ENCODE measurements at regions of chr2 and their contacts with region 1.

Region 1: DNA sequence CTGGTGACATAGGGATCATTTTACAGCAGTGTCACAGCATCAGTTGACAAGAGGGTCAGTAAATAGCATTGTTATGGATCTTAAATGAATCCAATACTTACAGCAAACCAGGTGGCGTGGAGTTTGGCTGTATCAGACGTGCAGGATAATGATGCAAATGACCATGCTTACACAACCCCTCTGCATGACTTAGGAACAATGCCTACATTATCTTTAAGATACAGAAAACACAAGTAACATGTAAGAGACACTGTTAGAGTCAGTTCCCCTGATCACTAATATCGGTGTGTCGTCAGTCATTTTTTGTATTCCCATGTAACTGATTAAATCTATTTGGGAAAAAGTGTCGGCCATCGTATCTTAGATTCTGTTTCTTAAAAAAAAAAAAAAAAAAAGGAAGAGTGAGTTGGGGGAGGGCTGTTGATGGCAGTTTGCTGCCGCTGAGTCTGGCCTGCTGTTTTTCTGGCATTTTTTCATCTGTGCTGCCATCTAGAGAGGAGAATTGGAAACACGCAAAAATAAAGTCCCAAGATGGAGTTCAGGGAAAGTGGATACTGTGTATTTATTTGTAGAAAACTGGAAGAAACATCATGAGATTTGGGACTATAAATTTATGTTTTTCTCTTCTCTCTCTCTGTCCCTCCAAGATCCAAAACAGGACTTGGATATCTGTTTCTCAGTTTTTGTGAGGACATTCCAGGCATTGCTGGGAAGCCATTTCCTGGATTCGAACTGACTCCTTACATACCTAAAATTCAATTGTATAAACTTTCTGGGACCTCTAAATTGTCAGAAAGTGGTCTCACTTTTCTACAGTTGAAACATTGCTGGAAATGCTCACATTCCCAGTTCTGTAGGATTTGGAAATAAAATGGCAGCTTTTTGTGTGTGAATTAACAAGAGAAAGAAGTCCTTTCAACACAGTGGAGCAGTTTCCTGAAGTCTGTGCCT is 60.3 kb upstream of the AGPS start:
- DNase-seq: peak; percentile 87
- H3K4me3 ChIP-seq: no peak overlapping the region
- H3K27ac ChIP-seq: peak overlapping the region; percentile 32
- H3K4me1 ChIP-seq: peaks cover 24% of the 10 kb centered on the region
- H3K27me3 ChIP-seq: no peaks in the 10 kb centered on the region
- CTCF ChIP-seq: peak; percentile 51 to 64
- POLR2A ChIP-seq: peak; percentile 25

Region 2: DNA sequence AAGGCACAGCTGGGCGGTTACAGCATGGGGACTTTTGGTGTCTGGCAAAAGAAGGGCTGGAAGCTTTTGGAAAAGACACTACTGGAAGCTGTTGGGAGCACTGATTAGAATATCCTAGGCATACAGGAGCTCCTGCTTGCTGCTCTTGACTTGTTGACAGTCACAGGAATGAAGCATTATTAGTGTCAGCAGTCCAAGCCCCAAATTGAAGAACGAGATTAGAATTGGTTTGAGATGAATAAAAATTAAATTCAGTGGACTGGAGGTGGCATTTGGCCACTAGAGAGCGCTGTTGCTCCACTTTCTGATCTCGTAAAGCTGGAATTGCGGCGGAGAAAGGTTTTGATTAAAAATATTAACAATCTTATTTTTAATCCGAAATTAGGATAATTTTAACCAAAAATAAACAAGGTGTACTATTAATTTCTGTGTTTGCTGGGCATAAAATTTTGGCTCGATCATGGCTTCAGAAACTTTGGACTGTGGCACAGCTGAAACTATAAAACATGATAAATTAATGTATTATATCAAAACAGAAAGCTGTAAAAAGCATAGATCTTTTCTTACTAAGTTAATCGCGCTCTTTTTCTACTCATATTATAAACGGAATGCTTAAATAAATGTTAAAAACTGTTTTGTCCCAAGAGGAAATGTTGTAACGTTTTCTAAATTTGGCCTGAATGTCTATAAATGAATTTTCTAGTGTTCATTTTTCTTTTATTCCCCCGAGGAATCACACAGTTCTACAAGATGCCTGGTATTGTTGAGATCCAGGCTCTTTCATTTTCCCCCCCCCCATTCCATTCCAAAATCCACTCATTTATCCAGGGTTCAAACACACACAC is 1205.2 kb before region 1 on chr2:
- CTCF ChIA-PET with region 1: no interaction called
- POLR2A ChIA-PET with region 1: no interaction called
- dilution Hi-C with region 1: no loop called
- intact Hi-C with region 1: loop called (anchors 1 kb)
- DNase-seq: peak; percentile 68
- H3K4me3 ChIP-seq: peak overlapping the region in 2 of 3 experiments; percentile 48 to 67
- H3K27ac ChIP-seq: no peak overlapping the region
- H3K4me1 ChIP-seq: peaks cover 33% of the 10 kb centered on the region
- H3K27me3 ChIP-seq: peaks cover 5 to 6% of the 10 kb centered on the region in 2 experiments
- CTCF ChIP-seq: peak; percentile 61 to 66
- POLR2A ChIP-seq: no peak

Region 3: DNA sequence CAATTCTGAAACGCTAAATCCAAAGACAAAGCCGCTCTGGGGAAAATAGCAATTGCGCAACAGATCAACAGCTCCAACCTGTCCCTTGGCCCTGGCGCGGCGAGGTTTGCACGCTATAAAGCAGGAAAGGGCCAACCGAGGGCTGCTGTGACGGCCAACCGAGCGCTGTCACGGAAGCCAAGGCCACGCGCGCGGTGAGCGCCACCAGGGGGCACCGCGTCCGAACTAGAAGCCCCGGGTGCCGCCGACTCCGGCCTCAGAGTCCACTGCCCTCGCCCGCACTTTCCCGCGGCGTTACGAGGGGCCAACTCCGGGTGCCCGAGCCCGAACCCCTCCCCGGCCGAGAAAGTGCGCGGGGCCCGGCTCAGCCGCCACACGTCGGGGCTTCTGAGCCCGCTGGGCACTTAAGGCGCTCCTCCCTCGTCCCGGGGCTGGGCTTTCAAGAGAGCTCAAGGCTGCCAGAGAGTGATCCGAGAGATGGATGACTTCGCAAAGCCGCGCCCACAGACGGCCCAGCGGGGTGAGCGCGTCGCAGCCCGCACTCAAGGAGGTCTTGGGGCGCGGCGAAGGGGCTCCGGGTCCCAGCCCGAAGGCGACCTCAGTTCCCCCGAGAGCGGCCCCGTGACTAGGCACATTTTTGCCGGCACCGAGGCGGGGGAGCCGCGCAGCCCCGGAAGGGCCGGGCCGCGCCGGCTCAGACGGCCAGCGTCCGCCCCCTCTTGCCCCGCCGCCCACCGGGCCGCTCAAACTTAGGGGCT is 68.7 kb before region 1 on chr2:
- CTCF ChIA-PET with region 1: interaction called, 20 read pairs
- POLR2A ChIA-PET with region 1: interaction called, 3 read pairs
- dilution Hi-C with region 1: no loop called
- intact Hi-C with region 1: loop called (anchors 1 kb)
- DNase-seq: peak; percentile 97
- H3K4me3 ChIP-seq: peak overlapping the region; percentile 79 to 98 (median 90)
- H3K27ac ChIP-seq: peak overlapping the region; percentile 94
- H3K4me1 ChIP-seq: peaks cover 27% of the 10 kb centered on the region
- H3K27me3 ChIP-seq: no peaks in the 10 kb centered on the region
- CTCF ChIP-seq: peak; percentile 91 to 98
- POLR2A ChIP-seq: peak; percentile 84

Region 4: DNA sequence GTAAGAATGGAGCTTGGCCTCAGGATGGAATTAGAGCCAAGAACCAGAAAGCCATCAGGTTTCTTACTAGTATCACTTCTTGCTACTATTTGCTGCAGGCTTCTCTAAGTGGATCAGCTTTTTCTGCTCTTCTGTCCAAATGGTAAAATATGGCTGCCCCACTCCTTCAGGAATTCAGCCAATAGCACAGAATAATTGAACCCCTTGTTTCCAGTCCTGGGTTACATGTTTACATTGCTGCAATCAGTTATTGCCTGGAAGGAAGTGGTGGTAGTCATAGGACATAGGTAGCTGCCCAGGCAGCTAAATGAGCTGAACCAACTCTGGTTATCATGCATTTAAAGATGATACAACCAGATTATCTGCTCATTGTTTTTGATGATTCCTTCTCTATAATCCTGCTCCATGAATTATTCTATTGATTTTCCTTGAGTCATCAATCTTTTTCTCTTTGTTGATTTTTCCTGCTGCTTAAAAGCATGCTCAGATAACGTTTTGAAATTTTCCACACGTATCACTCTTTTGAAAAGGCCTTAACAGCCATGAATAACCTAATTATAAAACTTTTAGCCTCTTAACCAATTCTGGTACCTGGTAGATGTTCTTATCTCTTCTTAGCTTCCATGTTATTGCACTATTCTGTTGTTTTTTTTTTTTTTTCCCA is 72.8 kb after region 1 on chr2:
- CTCF ChIA-PET with region 1: interaction called, 18 read pairs
- POLR2A ChIA-PET with region 1: no interaction called
- dilution Hi-C with region 1: no loop called
- intact Hi-C with region 1: no loop called
- DNase-seq: peak; percentile 65
- H3K4me3 ChIP-seq: no peak overlapping the region
- H3K27ac ChIP-seq: peak overlapping the region; percentile 7
- H3K4me1 ChIP-seq: peaks cover 40% of the 10 kb centered on the region
- H3K27me3 ChIP-seq: no peaks in the 10 kb centered on the region
- CTCF ChIP-seq: no peak
- POLR2A ChIP-seq: peak; percentile 58

Region 5: GRCh38 chr2:177489719-177490301 is 157.5 kb after region 1 on chr2:
- CTCF ChIA-PET with region 1: interaction called, 16 read pairs
- POLR2A ChIA-PET with region 1: no interaction called
- dilution Hi-C with region 1: no loop called
- intact Hi-C with region 1: loop called (anchors 1 kb)
- DNase-seq: peak; percentile 55
- H3K4me3 ChIP-seq: no peak overlapping the region
- H3K27ac ChIP-seq: no peak overlapping the region
- H3K4me1 ChIP-seq: no peaks in the 10 kb centered on the region
- H3K27me3 ChIP-seq: no peaks in the 10 kb centered on the region
- CTCF ChIP-seq: peak; percentile 42 to 45
- POLR2A ChIP-seq: no peak

Region 6: GRCh38 chr2:177724398-177725287 is 392.3 kb after region 1 on chr2:
- CTCF ChIA-PET with region 1: interaction called, 29 read pairs
- POLR2A ChIA-PET with region 1: no interaction called
- dilution Hi-C with region 1: no loop called
- intact Hi-C with region 1: loop called (anchors 1 kb)
- DNase-seq: peak; percentile 89
- H3K4me3 ChIP-seq: peak overlapping the region in 1 of 3 experiments; percentile 9
- H3K27ac ChIP-seq: peak overlapping the region; percentile 62
- H3K4me1 ChIP-seq: peaks cover 13% of the 10 kb centered on the region
- H3K27me3 ChIP-seq: no peaks in the 10 kb centered on the region
- CTCF ChIP-seq: peak; percentile 84 to 94
- POLR2A ChIP-seq: no peak